Activated CD4-positive, alpha-beta memory T cell treated with anti-CD3 and anti-CD28 coated beads for 36 hours (primary cell): ENCODE measurements at regions of chr16 and their contacts with region 1.

Region 1: DNA sequence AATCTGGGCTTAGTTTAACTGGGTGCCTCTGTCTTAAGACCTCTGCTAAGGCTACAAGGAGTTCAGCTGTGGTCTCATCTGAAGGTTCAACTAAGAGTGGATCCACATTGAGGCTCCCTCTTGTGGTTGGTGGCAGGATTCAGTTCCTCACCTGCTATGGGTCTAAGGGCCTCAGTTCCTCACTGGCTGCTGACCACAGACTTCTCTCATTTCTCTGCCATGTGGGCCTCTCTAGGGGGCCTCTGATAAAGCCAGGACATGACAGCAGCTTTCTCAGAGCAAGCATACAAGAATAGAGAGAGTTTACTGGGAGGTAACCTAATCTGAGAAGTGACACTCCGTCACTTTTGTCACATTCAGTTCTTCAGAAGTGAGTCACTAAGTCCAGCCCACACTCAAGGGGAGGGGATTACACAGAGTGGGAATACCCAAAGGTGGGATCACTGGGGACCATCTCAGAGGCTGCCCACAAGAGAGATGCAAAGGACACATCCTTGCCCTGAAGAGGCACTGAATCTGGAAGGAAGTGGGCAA is 19.2 kb upstream of the ABAT start:
- DNase-seq: peak; percentile 81
- H3K4me3 Mint-ChIP-seq: no peak overlapping the region
- H3K27ac Mint-ChIP-seq: peak overlapping the region; percentile 64
- H3K4me1 Mint-ChIP-seq: peaks cover 18% of the 10 kb centered on the region
- H3K27me3 Mint-ChIP-seq: no peaks in the 10 kb centered on the region

Region 2: GRCh38 chr16:8567750-8568617 is 87.3 kb before region 1 on chr16:
- CTCF ChIA-PET with region 1: interaction called, 10 read pairs
- POLR2A ChIA-PET with region 1: no interaction called
- intact Hi-C with region 1: loop called (anchors 1 kb)
- DNase-seq: peak; percentile 86
- H3K4me3 Mint-ChIP-seq: no peak overlapping the region
- H3K27ac Mint-ChIP-seq: no peak overlapping the region
- H3K4me1 Mint-ChIP-seq: peaks cover 5% of the 10 kb centered on the region
- H3K27me3 Mint-ChIP-seq: peaks cover 8% of the 10 kb centered on the region

Region 3: DNA sequence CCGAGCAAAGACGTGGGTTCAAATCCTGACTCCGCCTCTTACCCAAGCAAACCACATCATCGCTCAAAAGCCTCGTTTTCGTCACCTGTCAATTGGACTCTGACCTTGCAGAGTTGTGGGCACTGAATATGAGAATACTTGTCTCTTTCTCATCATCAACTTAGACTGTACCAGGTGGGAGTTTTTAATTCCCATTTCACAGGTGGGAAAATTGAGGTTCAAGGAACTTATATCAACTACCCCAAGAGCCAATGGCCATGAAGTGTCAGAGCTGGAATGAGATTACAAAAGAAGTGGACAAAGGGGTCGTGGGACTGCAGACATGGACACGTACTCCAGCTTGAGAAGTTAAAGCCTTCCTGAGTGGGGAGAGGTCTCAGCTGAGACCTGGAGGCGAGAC is 75.7 kb before region 1 on chr16:
- CTCF ChIA-PET with region 1: no interaction called
- POLR2A ChIA-PET with region 1: no interaction called
- intact Hi-C with region 1: no loop called
- DNase-seq: no peak
- H3K4me3 Mint-ChIP-seq: no peak overlapping the region
- H3K27ac Mint-ChIP-seq: no peak overlapping the region
- H3K4me1 Mint-ChIP-seq: no peaks in the 10 kb centered on the region
- H3K27me3 Mint-ChIP-seq: peaks cover 14% of the 10 kb centered on the region

Region 4: GRCh38 chr16:8674413-8675022 is 19.3 kb after region 1 on chr16 and contains the start of gene ABAT:
- CTCF ChIA-PET with region 1: no interaction called
- POLR2A ChIA-PET with region 1: no interaction called
- intact Hi-C with region 1: loop called (anchors 2 kb)
- DNase-seq: peak; percentile 93
- H3K4me3 Mint-ChIP-seq: peak within 1 kb of the TSS; percentile 79
- H3K27ac Mint-ChIP-seq: peak within 1 kb of the TSS; percentile 68
- H3K4me1 Mint-ChIP-seq: peaks cover 18% of the 10 kb centered on the region
- H3K27me3 Mint-ChIP-seq: no peaks in the 10 kb centered on the region
- total RNA-seq, gene ABAT: 8.7 to 10.0 TPM

Region 5: GRCh38 chr16:8806272-8806983 is 151.2 kb after region 1 on chr16:
- CTCF ChIA-PET with region 1: no interaction called
- POLR2A ChIA-PET with region 1: no interaction called
- intact Hi-C with region 1: no loop called
- DNase-seq: no peak
- H3K4me3 Mint-ChIP-seq: no peak overlapping the region
- H3K27ac Mint-ChIP-seq: no peak overlapping the region
- H3K4me1 Mint-ChIP-seq: peaks cover 6% of the 10 kb centered on the region
- H3K27me3 Mint-ChIP-seq: no peaks in the 10 kb centered on the region

Region 6: DNA sequence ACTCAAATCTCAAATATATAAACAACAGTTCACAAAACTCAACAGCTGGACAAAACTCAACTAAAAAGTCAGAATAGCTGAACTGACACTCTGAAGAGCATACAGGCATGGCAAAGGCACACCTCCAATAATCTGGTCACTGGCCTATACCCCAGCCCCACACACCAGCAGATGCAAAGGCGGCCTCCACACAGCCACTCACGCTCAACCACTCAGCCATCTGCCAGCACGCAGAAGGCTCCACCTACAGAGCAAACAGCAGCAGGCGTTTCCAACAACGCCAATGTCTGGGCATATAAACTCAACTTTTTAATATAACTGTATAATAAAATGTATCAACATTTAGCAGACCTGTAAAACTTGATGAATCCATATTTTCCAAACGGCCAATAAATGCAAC is 291.3 kb after region 1 on chr16:
- CTCF ChIA-PET with region 1: no interaction called
- POLR2A ChIA-PET with region 1: no interaction called
- intact Hi-C with region 1: no loop called
- DNase-seq: no peak
- H3K4me3 Mint-ChIP-seq: no peak overlapping the region
- H3K27ac Mint-ChIP-seq: no peak overlapping the region
- H3K4me1 Mint-ChIP-seq: peaks cover 95% of the 10 kb centered on the region
- H3K27me3 Mint-ChIP-seq: no peaks in the 10 kb centered on the region